A673 (cell line): ENCODE measurements at regions of chr2 and their contacts with region 1.

Region 1: GRCh38 chr2:84022810-84023431 is 436.2 kb downstream of the SUCLG1 start:
- DNase-seq: peak; percentile 69
- H3K4me3 ChIP-seq: no peak overlapping the region
- H3K27ac ChIP-seq: no peak overlapping the region
- H3K4me1 ChIP-seq: no peaks in the 10 kb centered on the region
- H3K27me3 ChIP-seq: no peaks in the 10 kb centered on the region
- CTCF ChIP-seq: peak; percentile 75

Region 2: GRCh38 chr2:83874712-83875430 is 148.1 kb before region 1 on chr2:
- CTCF ChIA-PET with region 1: no interaction called
- POLR2A ChIA-PET with region 1: no interaction called
- intact Hi-C with region 1: no loop called
- DNase-seq: no peak
- H3K4me3 ChIP-seq: no peak overlapping the region
- H3K27ac ChIP-seq: no peak overlapping the region
- H3K4me1 ChIP-seq: no peaks in the 10 kb centered on the region
- H3K27me3 ChIP-seq: no peaks in the 10 kb centered on the region
- CTCF ChIP-seq: no peak

Region 3: DNA sequence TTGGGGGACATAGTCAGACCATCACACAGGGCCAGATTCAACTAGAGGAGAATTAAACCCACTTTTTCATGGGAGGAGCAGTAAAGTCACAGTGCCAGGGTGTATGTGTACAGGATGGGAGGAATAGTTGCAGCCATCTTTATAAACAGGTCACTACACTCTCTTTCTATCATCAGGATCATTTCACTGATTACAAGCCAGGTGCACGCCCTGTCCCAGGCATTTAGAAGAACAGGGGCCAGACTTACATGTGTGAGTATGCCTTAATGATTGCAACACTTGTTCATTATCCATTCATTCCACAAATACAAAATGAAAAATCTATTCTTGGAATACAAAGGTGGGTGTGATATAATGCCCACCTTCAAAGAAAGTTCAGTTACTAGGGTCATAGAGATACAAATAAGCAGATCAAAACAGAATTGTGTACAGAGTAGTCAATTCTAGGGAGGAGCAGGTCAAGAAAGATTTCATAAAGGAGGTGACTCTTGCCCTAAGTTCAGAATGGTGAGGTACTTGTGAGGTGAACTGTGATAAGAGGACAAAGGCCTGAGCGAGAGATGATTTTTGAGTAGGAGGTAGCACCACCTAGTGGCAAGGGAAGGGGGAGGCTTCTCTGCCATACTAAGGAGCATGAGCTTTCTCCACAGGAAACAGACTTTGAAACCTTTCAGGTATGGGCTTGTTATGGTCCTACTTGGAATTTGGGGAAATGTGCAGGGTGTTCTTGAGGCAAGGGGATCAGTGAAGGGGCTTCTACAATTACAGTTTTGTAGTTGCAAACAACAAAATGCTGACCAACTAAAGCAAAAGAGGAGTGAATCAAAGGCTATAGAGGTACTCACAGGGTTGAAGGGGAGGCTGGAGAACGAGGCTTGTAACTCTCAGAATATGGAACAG is 279.8 kb after region 1 on chr2:
- CTCF ChIA-PET with region 1: interaction called, 4 read pairs
- POLR2A ChIA-PET with region 1: no interaction called
- intact Hi-C with region 1: loop called (anchors 2 kb)
- DNase-seq: peak; percentile 55
- H3K4me3 ChIP-seq: no peak overlapping the region
- H3K27ac ChIP-seq: no peak overlapping the region
- H3K4me1 ChIP-seq: no peaks in the 10 kb centered on the region
- H3K27me3 ChIP-seq: peaks cover 8% of the 10 kb centered on the region
- CTCF ChIP-seq: peak; percentile 82

Region 4: GRCh38 chr2:84314901-84315330 is 292.0 kb after region 1 on chr2:
- CTCF ChIA-PET with region 1: interaction called, 3 read pairs
- POLR2A ChIA-PET with region 1: no interaction called
- intact Hi-C with region 1: loop called (anchors 5 kb)
- DNase-seq: peak; percentile 83
- H3K4me3 ChIP-seq: no peak overlapping the region
- H3K27ac ChIP-seq: no peak overlapping the region
- H3K4me1 ChIP-seq: no peaks in the 10 kb centered on the region
- H3K27me3 ChIP-seq: peaks cover 6% of the 10 kb centered on the region
- CTCF ChIP-seq: peak; percentile 94

Region 5: GRCh38 chr2:84424152-84424551 is 401.2 kb after region 1 on chr2:
- CTCF ChIA-PET with region 1: interaction called, 3 read pairs
- POLR2A ChIA-PET with region 1: no interaction called
- intact Hi-C with region 1: loop called (anchors 2 kb)
- DNase-seq: peak; percentile 20
- H3K4me3 ChIP-seq: no peak overlapping the region
- H3K27ac ChIP-seq: no peak overlapping the region
- H3K4me1 ChIP-seq: no peaks in the 10 kb centered on the region
- H3K27me3 ChIP-seq: no peaks in the 10 kb centered on the region
- CTCF ChIP-seq: peak; percentile 62

Region 6: GRCh38 chr2:84686783-84687476 is 664.0 kb after region 1 on chr2:
- CTCF ChIA-PET with region 1: no interaction called
- POLR2A ChIA-PET with region 1: no interaction called
- intact Hi-C with region 1: no loop called
- DNase-seq: no peak
- H3K4me3 ChIP-seq: no peak overlapping the region
- H3K27ac ChIP-seq: no peak overlapping the region
- H3K4me1 ChIP-seq: no peaks in the 10 kb centered on the region
- H3K27me3 ChIP-seq: peaks cover 23% of the 10 kb centered on the region
- CTCF ChIP-seq: no peak